ENCODE measurements at regions of chr14 and their contacts with region 1.

Region 1: DNA sequence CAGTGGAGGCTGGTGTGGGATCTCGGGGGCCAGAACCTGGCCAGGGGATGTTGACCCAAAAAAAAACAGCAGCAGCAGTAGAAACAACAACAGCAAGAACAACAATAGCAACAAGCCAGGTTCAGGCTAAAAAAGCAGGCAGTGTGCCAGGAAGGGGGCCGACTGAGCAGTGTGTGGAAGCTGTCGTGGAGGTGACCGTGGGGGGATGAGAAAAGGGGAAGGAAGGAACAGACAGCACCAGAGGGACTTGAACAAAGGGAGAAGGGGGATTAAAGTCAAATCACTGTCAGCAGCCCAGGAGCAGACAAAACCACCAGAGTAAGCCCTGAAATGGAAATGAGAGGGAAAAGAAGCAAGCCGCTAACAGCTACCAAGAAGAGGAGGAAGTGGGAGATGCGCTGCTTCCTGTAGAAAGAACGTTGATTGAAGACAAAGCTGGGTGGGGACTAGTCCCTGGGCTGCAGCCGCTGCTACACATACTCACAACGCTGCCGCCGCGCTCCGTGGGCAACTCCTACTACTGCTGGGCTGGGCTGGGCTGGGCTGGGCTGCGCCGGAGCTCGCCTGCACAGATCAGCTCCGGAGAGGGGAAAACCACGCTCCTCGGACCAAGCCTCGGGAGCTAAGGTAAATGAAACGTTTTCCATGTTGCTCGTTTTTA is at the start of gene GNG2:
- DNase-seq: peak; percentile 91
- H3K4me3 Mint-ChIP-seq: peak within 1 kb of the TSS; percentile 96
- H3K27ac Mint-ChIP-seq: peak within 1 kb of the TSS; percentile 94
- H3K4me1 Mint-ChIP-seq: peaks cover 51% of the 10 kb centered on the region
- H3K27me3 Mint-ChIP-seq: no peaks in the 10 kb centered on the region
- total RNA-seq, gene GNG2: 176 to 181 TPM

Region 2: DNA sequence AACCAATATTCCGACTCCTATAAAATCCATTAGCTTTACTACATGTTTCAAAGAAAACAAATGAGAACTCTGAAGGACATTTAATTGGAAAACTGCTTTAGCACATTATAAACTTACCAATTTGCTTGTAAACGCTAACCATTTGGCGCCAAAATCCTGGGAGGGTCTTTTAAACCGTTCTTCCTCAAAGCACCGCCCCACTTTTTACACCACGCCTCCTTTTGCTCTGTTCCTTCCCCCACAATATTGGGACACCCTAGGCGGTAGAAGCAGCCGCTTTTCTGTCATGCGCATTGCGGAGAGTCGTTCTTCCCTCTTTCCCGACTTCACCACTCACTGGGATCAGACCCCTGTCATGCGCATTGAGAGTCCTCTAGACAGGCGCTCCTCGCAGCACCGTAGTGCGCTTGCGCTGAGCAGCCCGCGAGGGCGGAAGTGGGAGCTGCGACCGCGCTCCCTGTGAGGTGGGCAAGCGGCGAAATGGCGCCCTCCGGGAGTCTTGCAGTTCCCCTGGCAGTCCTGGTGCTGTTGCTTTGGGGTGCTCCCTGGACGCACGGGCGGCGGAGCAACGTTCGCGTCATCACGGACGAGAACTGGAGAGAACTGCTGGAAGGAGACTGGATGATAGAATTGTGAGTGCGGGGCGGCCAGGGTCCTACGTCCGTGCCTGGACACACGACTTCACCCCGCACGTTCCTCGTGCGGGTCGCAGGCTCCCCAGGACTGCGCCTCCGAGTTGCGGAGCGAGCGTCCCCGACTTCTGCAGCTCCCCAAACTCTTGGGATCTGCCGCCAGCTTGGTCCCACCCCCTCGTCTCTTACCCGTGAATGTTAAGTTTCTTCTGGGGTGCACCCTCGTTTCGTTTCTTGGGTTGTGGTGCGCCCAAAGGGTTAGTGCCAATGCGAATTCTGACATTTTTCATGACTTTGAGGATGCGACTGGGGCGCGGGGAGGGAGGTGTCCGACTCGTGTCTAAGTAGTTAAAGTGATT is 620.2 kb before region 1 on chr14 and contains the start of gene TMX1:
- CTCF ChIA-PET with region 1: no interaction called
- intact Hi-C with region 1: loop called (anchors 5 kb)
- DNase-seq: peak; percentile 95
- H3K4me3 Mint-ChIP-seq: no peak within 1 kb of the TSS
- H3K27ac Mint-ChIP-seq: no peak within 1 kb of the TSS
- H3K4me1 Mint-ChIP-seq: peaks cover 28% of the 10 kb centered on the region
- H3K27me3 Mint-ChIP-seq: no peaks in the 10 kb centered on the region
- total RNA-seq, gene TMX1: 59.4 to 59.6 TPM

Region 3: DNA sequence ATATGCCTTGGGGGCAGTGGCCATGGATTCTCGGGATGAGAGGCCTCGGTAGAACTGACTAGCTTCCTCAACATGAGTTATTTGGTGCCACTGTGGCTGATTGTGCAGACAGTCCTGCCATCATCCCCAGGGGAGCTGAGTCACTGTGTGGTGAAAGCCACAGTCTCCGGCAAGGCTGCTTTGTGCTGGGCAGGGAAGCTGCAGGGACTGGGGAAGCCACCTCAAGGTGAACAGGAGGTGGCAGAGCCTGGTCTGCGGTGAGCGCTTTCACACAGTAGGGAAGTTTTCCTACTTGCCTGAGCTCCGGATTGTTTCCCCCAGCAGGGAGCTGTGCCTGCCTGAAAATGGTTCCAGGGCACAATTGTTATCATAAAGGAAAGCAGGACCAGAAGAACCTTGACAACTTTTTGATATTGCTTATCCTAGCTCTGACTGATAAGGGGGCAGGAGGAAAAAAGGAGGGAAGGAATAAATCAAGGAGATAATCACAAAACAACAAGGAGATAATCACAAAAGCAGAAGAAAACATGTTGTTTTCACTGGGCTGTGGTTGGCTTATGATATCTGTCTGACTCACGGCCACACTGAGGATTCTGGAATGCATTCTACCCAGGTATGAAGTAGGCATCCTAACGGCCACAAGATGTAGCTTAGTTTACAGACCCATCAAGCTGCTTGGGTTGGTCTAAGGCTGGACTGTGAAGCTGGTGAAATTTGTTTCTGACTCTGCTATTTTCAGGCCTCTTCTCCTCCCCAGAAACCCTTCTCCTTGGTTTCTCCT is 32.1 kb before region 1 on chr14:
- CTCF ChIA-PET with region 1: interaction called, 4 read pairs
- intact Hi-C with region 1: loop called (anchors 1 kb)
- DNase-seq: peak; percentile 89
- H3K4me3 Mint-ChIP-seq: no peak overlapping the region
- H3K27ac Mint-ChIP-seq: peak overlapping the region; percentile 48
- H3K4me1 Mint-ChIP-seq: no peaks in the 10 kb centered on the region
- H3K27me3 Mint-ChIP-seq: no peaks in the 10 kb centered on the region

Region 4: GRCh38 chr14:51880835-51881580 is 20.7 kb after region 1 on chr14:
- CTCF ChIA-PET with region 1: interaction called, 5 read pairs
- intact Hi-C with region 1: loop called (anchors 1 kb)
- DNase-seq: no peak
- H3K4me3 Mint-ChIP-seq: no peak overlapping the region
- H3K27ac Mint-ChIP-seq: no peak overlapping the region
- H3K4me1 Mint-ChIP-seq: peaks cover 76% of the 10 kb centered on the region
- H3K27me3 Mint-ChIP-seq: no peaks in the 10 kb centered on the region

Region 5: DNA sequence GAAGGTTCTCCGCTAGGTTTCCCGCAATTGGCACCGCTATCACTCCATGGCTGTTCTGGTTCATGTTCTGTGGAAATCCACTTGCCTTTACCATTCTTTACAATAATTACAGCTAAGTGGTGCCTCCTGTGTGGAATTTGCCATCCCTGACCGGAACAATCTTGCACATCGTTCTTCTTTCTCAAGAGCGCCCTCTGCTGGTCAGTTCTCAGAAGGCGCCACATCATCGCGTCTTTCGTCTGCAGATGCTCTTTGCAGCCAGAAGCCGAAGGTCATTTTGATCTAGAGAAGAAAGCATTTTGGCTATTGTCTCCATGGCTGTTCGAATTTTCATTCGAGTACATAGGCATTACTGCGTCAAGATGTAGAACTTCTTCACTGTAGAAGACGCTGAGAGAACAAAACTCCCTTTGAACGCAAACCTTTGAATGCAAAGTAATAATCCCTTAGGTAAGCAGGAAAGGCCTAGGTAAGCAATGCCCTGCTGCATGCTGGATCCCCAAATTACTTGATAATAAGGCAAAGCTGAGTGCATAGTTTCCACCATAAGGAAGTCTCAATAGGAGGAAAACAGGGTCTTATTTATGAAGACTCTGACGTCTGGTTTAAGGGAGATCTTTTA is 118.9 kb after region 1 on chr14:
- CTCF ChIA-PET with region 1: interaction called, 8 read pairs
- intact Hi-C with region 1: loop called (anchors 2 kb)
- DNase-seq: peak; percentile 91
- H3K4me3 Mint-ChIP-seq: no peak overlapping the region
- H3K27ac Mint-ChIP-seq: no peak overlapping the region
- H3K4me1 Mint-ChIP-seq: peaks cover 4% of the 10 kb centered on the region
- H3K27me3 Mint-ChIP-seq: no peaks in the 10 kb centered on the region

Region 6: GRCh38 chr14:52086711-52087110 is 226.4 kb after region 1 on chr14:
- CTCF ChIA-PET with region 1: no interaction called
- intact Hi-C with region 1: no loop called
- DNase-seq: no peak
- H3K4me3 Mint-ChIP-seq: no peak overlapping the region
- H3K27ac Mint-ChIP-seq: no peak overlapping the region
- H3K4me1 Mint-ChIP-seq: no peaks in the 10 kb centered on the region
- H3K27me3 Mint-ChIP-seq: peaks cover 20% of the 10 kb centered on the region

Measured in activated naive CD4-positive, alpha-beta T cell treated with anti-CD3 and anti-CD28 coated beads for 36 hours (primary cell).